ENCODE measurements at regions of chr21 and their contacts with region 1.

Region 1: DNA sequence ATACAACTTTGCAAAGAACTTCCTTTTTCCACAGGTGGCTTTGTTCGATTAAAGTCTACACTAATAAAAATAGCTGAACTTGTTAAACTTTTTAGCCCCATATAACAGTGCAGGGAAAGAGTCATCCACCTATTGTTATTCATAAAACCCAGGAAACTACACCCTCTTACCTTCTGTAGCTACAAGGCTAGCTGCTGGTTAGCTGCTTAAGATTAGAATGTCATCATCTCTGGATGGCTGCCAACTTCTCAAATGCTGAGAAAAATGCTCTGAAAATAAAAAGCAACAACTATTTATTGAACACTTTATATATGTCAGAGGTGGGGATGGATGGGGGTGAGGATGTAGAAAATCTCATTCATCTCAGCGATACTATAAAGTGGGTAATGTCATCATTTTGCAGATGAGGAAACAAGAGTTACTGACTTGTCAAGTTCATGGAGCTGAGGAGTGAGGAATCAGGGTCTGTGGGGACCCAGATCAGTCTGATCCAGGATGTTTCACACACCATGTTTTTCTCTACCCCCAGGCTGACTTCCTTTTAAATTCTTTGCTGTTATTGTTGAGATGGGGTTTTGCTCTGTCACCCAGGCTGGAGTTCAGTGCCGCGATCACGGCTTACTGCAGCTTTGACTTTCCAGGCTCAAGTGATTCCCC is 17.1 kb downstream of the ATP5PF start:
- DNase-seq: no peak
- ATAC-seq: no peak
- H3K4me3 ChIP-seq: no peak overlapping the region
- H3K27ac ChIP-seq: no peak overlapping the region
- H3K4me1 ChIP-seq: no peaks in the 10 kb centered on the region
- H3K27me3 ChIP-seq: no peaks in the 10 kb centered on the region
- CTCF ChIP-seq: no peak
- POLR2A ChIP-seq: no peak

Region 2: DNA sequence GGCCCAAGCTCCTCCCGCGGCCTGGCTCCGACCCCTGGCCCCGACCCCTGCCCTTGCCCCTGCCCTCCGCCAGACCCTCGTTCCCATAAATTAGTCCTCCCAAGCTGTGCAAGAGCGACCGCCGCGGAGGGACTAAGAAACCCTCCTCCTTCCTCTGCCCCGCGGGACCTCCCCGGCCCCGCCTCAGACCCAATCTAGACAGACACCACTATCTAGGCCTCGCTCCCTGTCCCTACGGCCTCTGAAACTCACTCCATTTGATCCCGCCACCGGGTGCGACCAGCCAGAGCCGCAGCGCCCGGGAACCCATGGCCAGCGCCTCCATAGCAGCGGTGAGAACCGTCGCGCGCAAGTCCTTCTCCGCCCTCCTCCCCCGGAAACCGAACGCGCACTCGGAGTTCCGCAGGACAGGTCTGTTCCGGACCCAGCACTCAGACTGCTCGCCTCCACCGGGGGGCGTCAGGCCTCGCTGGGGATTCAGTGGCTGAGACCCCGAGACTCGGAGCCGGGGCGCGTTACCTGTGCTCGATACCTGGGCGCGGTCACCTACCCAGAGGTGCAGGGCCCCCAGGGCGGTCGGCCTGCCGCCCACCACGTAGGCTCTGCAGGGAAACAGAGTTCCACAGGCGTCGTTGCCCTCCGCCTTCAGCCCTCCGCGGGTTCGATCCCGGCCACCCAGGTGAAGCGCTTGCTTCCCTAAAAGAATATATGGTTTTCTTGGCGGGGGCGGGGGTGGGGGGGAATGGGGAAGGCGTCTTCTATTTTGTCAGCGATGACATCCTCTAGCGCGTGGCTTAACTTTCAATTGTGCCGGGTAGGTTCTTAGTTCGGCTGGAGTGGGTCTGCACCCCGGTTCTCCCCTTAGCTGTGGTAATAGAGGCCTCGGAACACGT is 110.2 kb before region 1 on chr21 and contains the start of gene MRPL39:
- intact Hi-C with region 1: loop called in 1 of 2 experiments (anchors 10 kb)
- DNase-seq: peak; percentile 87 to 90 (median 87)
- ATAC-seq: peak; percentile 97
- H3K4me3 ChIP-seq: peak within 1 kb of the TSS; percentile 70 to 78 (median 75)
- H3K27ac ChIP-seq: peak within 1 kb of the TSS; percentile 58 to 79 (median 70)
- H3K4me1 ChIP-seq: peaks cover 0 to 8% (median 3%) of the 10 kb centered on the region in 4 donors
- H3K27me3 ChIP-seq: no peaks in the 10 kb centered on the region
- CTCF ChIP-seq: peak; percentile 49 to 56 (median 52)
- POLR2A ChIP-seq: peak; percentile 70
- total RNA-seq, gene MRPL39: 18.4 to 23.8 (median 19.5) TPM

Region 3: DNA sequence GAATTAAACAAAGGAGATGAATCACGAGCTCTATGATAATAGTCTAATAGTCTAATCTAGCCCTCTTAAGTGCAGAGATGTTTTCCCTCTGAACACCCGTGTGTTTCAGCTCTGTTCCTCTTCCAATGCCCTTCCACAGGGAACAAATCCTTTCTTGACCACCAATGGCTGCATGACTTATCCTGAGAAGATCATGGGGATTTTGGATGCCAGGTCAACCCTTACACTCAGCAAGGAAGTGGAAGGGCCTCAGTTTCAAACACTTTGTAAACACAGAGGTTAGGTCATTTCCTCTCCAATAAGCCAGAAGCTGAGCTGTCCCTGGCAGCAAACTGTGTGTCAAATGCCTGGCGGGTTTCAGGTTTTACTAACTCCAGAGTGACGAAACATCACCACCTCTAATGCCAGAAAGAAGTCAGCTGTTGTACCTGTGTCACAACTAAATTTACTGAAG is 217.2 kb after region 1 on chr21:
- intact Hi-C with region 1: no loop called
- DNase-seq: peak; percentile 72 to 86 (median 78)
- ATAC-seq: peak; percentile 95 to 98 (median 98)
- H3K4me3 ChIP-seq: no peak overlapping the region
- H3K27ac ChIP-seq: peak overlapping the region; percentile 58 to 77 (median 68)
- H3K4me1 ChIP-seq: peaks cover 0 to 12% (median 2%) of the 10 kb centered on the region in 4 donors
- H3K27me3 ChIP-seq: no peaks in the 10 kb centered on the region
- CTCF ChIP-seq: no peak
- POLR2A ChIP-seq: peak; percentile 32

Measured in right lobe of liver (tissue), 6 donors.